Head of caudate nucleus (tissue), 42 donors: ENCODE measurements at regions of chr10 and their contacts with region 1.

Region 1: DNA sequence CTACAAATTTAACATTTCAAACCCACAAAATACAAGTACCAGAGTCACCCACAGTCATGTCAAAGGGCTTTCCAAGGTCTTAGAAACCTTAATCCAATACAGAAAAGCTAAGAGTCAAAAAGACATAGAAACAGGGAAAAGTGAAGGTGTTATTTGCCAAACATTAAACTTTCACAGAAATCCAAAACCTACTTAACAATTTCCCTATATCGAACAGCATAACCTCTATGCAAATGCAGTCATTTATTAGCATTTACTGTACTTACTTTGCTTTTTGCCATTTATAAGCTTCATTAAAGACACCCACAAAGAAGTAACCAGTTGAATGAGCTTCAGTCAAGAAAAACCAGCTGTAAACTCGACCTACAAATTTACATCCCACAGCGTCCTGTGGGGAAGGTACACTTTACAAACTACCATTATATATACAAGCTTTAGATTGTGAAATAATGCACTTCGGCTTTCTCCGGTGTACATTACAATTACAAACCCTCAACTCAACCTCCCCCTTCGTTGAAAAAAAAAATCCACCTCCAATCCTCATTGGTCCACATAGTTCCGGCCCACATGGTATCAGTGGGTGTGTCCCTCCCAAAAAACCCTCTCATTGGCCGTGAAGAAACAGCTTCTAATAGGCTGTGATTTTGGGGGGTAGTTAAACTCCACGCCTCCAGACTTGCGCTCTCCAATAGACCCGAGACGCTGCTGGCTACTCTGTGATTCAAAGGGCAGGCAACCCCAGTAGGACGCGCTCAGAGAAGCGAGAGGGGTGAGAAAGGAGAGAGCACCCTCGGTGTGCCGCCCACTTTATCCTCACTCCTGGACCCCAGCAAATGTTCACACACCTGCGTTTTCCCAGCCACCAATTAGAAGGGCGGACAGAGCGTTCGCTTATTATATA is 1.4 kb downstream of the PANK1 start:
- DNase-seq: peak; percentile 64 to 94 (median 85)

Region 2: GRCh38 chr10:89251409-89252224 is 392.1 kb before region 1 on chr10 and contains the start of gene LIPA:
- intact Hi-C with region 1: no loop called
- DNase-seq: peak; percentile 92 to 99 (median 97)

Region 3: GRCh38 chr10:89701238-89702120 is 57.8 kb after region 1 on chr10 and contains the start of gene KIF20B:
- intact Hi-C with region 1: loop called (anchors 2 kb)
- DNase-seq: peak; percentile 91 to 98 (median 96)

Region 4: GRCh38 chr10:89904755-89905154 is 261.1 kb after region 1 on chr10:
- intact Hi-C with region 1: no loop called
- DNase-seq: no peak